ENCODE measurements at regions of chr5 and their contacts with region 1.

Region 1: GRCh38 chr5:59174248-59174844 is 591.5 kb downstream of the RAB3C start:
- DNase-seq: no peak
- H3K4me3 ChIP-seq: no peak overlapping the region
- H3K27ac ChIP-seq: no peak overlapping the region
- H3K4me1 ChIP-seq: no peaks in the 10 kb centered on the region
- H3K27me3 ChIP-seq: no peaks in the 10 kb centered on the region
- CTCF ChIP-seq: peak; percentile 63 to 70 (median 63)
- POLR2A ChIP-seq: no peak

Region 2: GRCh38 chr5:59525959-59526358 is 351.6 kb after region 1 on chr5:
- intact Hi-C with region 1: no loop called
- DNase-seq: no peak
- H3K4me3 ChIP-seq: no peak overlapping the region
- H3K27ac ChIP-seq: no peak overlapping the region
- H3K4me1 ChIP-seq: no peaks in the 10 kb centered on the region
- H3K27me3 ChIP-seq: no peaks in the 10 kb centered on the region
- CTCF ChIP-seq: no peak
- POLR2A ChIP-seq: no peak

Region 3: DNA sequence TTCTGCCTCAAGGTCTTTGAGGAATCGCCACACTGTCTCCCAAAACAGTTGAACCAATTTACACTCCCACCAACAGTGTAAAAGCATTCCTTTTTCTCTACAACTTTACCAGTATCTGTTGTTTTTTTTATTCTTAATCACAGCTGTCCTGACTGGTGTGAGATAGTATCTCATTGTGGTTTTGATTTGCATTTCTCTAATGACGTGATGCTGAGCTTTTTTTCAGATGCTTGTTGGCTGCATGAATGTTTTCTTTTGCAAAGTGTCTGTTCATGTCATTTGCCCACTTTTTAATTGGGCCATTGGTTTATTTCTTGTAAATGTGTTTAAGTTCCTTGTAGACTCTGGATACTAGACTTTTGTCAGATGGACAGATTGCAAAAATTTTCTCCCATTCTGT is 1125.6 kb after region 1 on chr5:
- intact Hi-C with region 1: loop called (anchors 5 kb)
- DNase-seq: no peak
- H3K4me3 ChIP-seq: no peak overlapping the region
- H3K27ac ChIP-seq: no peak overlapping the region
- H3K4me1 ChIP-seq: no peaks in the 10 kb centered on the region
- H3K27me3 ChIP-seq: no peaks in the 10 kb centered on the region
- CTCF ChIP-seq: no peak
- POLR2A ChIP-seq: no peak